ENCODE measurements at regions of chr7 and their contacts with region 1.

Region 1: GRCh38 chr7:87219545-87220025 is at the start of gene TMEM243:
- DNase-seq: peak; percentile 95
- total RNA-seq, gene TMEM243: 18.7 to 21.0 TPM

Region 2: DNA sequence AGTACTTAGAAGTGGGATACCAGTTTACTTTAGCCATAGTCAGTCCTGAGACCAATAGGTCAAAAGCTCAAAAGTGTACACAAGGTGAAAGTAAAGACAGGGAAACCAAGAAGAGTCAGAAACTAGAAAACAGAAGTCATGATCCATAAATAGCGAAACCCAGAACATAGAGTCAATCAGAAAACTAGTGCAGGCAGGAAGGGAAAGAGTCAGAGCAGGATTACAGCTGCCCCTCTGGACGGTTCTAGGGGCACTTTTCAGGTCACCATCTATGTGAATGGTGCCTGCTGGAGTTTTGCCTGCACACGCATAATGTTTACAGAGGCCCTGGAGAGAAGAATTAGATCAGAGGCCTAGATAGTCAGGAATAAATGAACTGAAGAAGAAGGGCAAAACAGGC is 89.7 kb before region 1 on chr7:
- intact Hi-C with region 1: no loop called
- DNase-seq: no peak

Region 3: DNA sequence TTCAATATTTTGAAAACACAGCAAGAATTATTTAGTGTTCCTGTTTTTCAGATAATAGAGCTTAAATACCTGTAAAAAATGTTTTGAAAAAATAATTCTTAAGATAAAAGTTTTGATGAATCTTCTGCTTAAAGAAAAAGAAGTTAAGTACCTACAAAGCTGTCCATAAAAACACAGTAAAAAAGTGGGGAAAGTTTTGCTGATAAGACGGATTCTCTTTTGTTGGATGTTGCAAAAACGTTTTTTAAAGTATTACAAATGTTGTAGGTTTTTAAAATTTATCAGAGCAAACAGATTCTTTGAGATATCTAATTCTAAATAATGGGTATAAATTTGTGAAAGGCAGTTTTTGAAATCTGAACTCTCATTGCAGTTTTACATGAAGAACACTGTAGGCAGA is 55.2 kb before region 1 on chr7:
- intact Hi-C with region 1: loop called in 1 of 2 experiments (anchors 10 kb)
- DNase-seq: no peak

Measured in posterior vena cava (tissue), 2 donors.